PC-9 (cell line): ENCODE measurements at regions of chr4 and their contacts with region 1.

Region 1: GRCh38 chr4:8176547-8177399 is 18.2 kb upstream of the ABLIM2 start:
- DNase-seq: peak in 1 of 2 experiments; percentile 48
- H3K4me3 ChIP-seq: no peak overlapping the region
- H3K27ac ChIP-seq: no peak overlapping the region
- H3K4me1 ChIP-seq: peaks cover 21% of the 10 kb centered on the region
- H3K27me3 ChIP-seq: no peaks in the 10 kb centered on the region
- CTCF ChIP-seq: peak; percentile 75

Region 2: DNA sequence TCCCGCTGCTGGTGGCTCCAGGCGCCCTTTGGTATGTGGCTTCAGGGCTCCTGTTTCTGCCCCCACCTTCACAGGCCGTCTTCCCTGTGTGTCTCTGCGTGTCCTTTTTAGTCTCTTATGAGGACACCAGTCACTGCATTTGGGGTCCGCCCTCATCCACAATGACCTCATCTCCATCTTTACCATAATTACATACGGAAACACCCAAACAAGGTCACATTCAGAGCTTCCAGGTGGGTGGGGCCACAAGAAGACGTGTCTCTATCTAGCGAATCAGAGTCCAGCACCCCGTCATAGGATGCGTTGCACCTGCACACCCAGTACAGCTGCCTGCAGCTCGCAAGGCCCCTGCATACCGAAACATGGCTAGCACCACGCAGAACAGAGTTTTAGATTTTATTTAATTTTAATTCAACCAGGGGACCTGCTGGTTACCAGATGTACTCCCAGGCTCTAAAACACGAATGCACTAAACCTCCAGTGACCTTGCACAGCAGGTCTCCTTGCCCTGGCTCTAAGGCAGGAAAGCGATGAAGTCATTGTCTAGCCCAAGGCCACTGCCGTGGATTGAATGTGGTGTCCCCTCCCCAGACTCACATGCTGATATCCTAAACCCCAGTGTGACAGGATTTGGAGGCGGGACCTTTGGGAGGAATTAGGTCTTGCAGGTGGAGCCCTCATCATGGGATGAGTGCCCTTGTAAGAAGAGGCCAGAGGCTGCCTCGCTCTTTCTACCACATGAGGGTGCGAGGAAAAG is 48.5 kb before region 1 on chr4:
- CTCF ChIA-PET with region 1: no interaction called
- POLR2A ChIA-PET with region 1: no interaction called
- intact Hi-C with region 1: no loop called
- DNase-seq: no peak
- H3K4me3 ChIP-seq: no peak overlapping the region
- H3K27ac ChIP-seq: no peak overlapping the region
- H3K4me1 ChIP-seq: no peaks in the 10 kb centered on the region
- H3K27me3 ChIP-seq: peaks cover 25% of the 10 kb centered on the region; the same call in 1 of the 2 replicates
- CTCF ChIP-seq: no peak

Region 3: DNA sequence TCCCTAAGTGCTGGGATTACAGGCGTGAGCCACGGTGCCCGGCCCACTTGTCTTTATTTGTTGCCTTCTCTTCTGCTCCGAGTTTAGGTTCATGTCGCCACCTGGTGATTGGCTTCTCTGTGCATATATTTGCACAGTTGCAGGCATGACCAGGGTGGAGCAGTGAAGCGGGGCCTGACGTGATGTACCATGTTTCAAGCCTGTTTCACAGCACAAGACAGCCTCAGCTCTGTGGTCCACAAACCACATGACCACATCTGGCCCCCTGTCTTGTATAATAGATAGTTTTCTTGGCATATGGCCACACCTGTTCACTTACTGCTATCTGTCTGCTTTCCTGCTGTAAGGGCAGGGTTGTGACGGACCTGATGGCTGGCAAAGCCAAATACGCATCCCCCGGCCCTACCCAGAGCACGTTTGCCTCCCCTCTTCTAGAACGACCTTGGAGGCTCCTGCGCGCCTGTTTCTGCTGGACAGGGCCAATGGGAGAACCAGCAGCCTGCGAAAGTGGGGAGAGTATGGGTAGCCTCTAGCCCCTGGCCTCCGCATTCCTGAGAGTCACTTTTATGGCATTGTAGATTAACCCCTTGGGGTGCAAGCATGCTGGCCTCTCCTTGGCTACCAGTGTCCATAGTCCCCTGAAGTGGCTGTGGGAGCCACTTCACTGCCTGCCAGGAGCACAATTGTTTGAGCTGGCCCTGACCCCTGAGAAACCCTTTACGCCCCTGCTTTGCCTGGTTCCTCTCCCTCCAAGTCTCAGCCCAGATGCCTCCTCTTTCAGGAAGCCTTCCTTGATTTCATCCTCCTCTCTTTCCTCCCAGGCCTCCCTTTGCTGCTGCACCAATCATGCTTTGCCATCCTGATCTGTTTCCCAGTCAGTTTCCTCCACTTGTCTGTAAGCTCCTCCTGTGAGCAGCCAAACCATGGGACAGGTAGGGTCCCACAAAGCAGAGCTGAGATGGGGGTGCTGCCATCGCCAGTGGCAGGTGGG is 16.3 kb after region 1 on chr4:
- CTCF ChIA-PET with region 1: interaction called, 10 read pairs
- POLR2A ChIA-PET with region 1: no interaction called
- intact Hi-C with region 1: no loop called
- DNase-seq: no peak
- H3K4me3 ChIP-seq: no peak overlapping the region
- H3K27ac ChIP-seq: no peak overlapping the region
- H3K4me1 ChIP-seq: peaks cover 42% of the 10 kb centered on the region
- H3K27me3 ChIP-seq: no peaks in the 10 kb centered on the region
- CTCF ChIP-seq: no peak; the same call in 1 of the 2 replicates

Region 4: DNA sequence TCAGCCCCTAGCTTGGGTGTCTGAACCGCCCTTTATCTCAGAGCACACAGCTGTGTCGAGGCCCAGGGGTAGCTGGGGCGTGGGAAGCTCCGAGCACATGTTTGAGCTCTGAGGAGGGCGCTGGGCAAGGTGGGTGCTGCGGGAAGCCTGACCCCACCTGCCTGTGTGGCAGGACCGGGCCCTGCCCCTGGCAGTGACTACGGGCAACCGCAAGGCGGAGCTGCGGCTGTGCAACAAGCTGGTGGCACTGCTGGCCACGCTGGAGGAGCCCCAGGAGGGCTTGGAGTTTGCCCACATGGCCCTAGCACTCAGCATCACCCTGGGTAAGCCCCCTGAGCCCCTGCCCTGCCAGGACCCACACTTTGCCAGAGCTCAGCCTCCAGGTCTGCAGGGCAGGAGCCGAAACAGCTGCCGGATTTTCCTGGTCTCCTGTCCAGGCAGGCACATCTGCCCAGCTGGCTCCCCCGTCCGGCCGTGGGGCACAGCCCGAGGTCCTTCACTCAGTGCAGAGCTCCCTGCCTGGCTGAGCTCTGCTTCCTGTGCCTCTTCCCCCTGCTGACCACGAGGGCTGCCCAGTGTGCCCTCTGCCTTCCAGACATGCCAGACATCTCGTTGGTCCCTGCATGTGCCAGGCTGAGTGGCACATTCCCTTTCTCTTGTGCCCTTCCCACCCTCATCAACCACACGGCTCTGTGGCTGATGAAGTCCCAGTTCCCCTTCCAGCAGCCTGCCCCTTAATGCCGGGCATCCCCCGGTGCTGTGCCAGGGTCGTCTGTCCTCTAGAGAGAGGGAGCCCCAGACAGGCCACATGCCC is 59.5 kb after region 1 on chr4:
- CTCF ChIA-PET with region 1: interaction called, 12 read pairs
- POLR2A ChIA-PET with region 1: no interaction called
- intact Hi-C with region 1: no loop called
- DNase-seq: peak in 1 of 2 experiments; percentile 16
- H3K4me3 ChIP-seq: no peak overlapping the region
- H3K27ac ChIP-seq: no peak overlapping the region
- H3K4me1 ChIP-seq: no peaks in the 10 kb centered on the region
- H3K27me3 ChIP-seq: no peaks in the 10 kb centered on the region
- CTCF ChIP-seq: no peak

Region 5: DNA sequence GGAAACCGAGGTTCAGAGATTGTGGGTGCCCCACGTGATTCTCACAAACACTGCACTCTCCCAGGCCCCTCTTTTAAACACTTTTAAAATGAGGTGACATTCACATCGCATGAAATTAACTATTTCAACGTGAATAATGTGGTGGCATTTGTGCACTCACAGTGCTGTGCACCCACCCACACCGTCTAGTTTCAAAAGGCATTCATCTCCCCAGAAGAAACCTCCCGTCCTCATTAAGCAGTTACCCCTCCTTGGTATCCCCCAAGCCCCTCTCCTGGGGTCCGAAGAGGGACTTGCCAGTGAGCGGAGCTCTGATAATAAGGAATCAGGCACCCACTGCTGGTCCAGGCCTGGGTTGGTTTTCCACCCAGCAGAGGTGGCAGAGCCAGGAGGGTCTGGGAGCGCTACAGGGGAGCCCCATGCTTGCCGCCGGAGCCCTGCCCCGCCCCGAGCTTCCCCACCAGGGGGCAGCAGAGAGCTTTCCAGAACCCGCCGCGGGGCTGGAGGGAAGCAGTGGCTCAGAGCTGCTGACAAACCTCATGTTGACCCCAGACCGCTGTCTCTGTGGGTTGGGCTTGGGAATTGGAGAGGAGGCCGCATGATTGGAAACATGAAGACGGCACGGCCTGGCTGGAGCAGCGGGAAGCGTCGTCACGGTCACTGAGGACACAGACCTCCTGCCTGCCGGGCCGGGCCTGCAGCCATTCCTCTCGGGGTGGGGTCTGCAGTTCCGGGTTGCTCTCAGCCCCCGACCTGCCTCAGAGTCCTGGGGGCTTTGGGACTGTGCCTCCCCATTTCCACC is 65.3 kb after region 1 on chr4:
- CTCF ChIA-PET with region 1: interaction called, 12 read pairs
- POLR2A ChIA-PET with region 1: no interaction called
- intact Hi-C with region 1: loop called (anchors 2 kb)
- DNase-seq: peak in 1 of 2 experiments; percentile 85
- H3K4me3 ChIP-seq: no peak overlapping the region
- H3K27ac ChIP-seq: no peak overlapping the region
- H3K4me1 ChIP-seq: peaks cover 5% of the 10 kb centered on the region; the same call in 1 of the 2 replicates
- H3K27me3 ChIP-seq: no peaks in the 10 kb centered on the region
- CTCF ChIP-seq: peak; percentile 84

Region 6: GRCh38 chr4:8403173-8403753 is 226.5 kb after region 1 on chr4:
- CTCF ChIA-PET with region 1: interaction called, 9 read pairs
- POLR2A ChIA-PET with region 1: no interaction called
- intact Hi-C with region 1: loop called (anchors 1 kb)
- DNase-seq: peak in 1 of 2 experiments; percentile 82
- H3K4me3 ChIP-seq: no peak overlapping the region
- H3K27ac ChIP-seq: no peak overlapping the region
- H3K4me1 ChIP-seq: no peaks in the 10 kb centered on the region
- H3K27me3 ChIP-seq: no peaks in the 10 kb centered on the region
- CTCF ChIP-seq: peak; percentile 91

Region 7: GRCh38 chr4:8754634-8755589 is 578.1 kb after region 1 on chr4:
- CTCF ChIA-PET with region 1: no interaction called
- POLR2A ChIA-PET with region 1: no interaction called
- intact Hi-C with region 1: no loop called
- DNase-seq: no peak
- H3K4me3 ChIP-seq: no peak overlapping the region
- H3K27ac ChIP-seq: no peak overlapping the region
- H3K4me1 ChIP-seq: no peaks in the 10 kb centered on the region
- H3K27me3 ChIP-seq: peaks cover 67% of the 10 kb centered on the region
- CTCF ChIP-seq: no peak